ENCODE measurements at regions of chr3 and their contacts with region 1.

Region 1: GRCh38 chr3:192980632-192981031 is 63.0 kb upstream of the MB21D2 start:
- DNase-seq: no peak
- H3K4me3 ChIP-seq: no peak overlapping the region
- H3K27ac ChIP-seq: no peak overlapping the region
- H3K4me1 ChIP-seq: no peaks in the 10 kb centered on the region
- H3K27me3 ChIP-seq: no peaks in the 10 kb centered on the region
- CTCF ChIP-seq: no peak
- POLR2A ChIP-seq: no peak

Region 2: DNA sequence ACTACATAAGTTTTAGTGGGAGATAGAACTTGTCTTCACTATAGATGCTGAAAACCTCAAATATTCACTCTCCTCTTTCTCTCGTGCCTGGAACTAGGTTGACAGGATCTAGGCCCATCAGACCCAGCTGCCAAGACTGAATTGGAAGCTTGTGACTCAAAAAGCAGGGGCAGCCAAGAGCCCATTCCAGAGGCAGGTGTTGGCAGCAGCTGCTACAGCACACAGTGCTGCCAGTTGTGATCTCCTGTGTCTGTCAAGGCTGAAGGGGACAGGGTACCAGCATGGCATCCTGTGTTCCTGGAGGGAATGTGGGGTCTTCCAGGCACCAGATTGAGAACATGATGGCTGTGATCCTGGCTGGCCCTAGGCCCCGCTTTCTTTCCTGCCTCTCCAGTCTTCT is 29.6 kb after region 1 on chr3:
- intact Hi-C with region 1: loop called (anchors 2 kb)
- DNase-seq: no peak
- H3K4me3 ChIP-seq: no peak overlapping the region
- H3K27ac ChIP-seq: no peak overlapping the region
- H3K4me1 ChIP-seq: no peaks in the 10 kb centered on the region
- H3K27me3 ChIP-seq: no peaks in the 10 kb centered on the region
- CTCF ChIP-seq: no peak
- POLR2A ChIP-seq: no peak

Measured in breast epithelium (tissue), 4 donors.